H1 (cell line): ENCODE measurements at regions of chr2 and their contacts with region 1.

Region 1: DNA sequence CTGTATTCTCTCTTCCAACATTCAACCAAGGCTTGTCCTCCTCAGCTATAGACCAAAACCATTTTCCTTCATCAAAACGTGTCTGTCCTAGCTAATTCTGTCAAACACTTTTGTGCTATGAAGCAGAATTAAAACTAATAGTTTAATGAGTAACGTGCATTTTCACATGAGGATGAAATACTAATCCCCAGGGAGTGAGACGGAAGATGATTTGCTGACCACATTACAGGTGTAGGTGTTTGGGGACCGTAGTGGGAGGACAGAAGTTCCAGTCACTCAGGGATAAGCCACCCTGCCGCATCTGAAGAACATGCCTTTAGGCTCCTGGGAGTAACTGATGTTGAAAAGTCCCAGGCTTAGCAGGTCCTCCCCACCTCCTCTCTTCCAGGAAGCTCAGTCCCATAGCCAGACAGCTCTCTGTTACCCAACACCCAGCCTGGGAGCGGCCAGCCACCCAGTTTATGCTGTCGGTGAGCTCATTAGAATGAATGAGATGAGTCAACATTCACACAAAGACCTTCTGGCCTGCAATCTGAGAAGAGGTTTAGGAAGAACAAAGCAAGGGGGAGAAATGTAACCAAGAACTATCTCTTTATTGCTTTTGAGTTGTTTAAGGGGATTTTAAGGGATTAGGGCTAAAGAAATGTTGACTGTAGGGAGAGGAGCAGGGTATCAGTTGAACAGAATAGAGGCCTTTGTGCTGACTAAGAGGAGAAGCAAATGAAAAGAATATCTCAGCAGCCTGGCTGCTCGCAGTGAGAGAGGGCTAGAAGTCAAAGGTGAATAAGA is 122.5 kb downstream of the FOXI3 start:
- DNase-seq: peak; percentile 54 to 77
- H3K4me3 ChIP-seq: no peak overlapping the region
- H3K27ac ChIP-seq: no peak overlapping the region
- H3K4me1 ChIP-seq: peaks cover 2 to 12% (median 9%) of the 10 kb centered on the region in 4 experiments; a peak in 6 of 7 replicates
- H3K27me3 ChIP-seq: no peaks in the 10 kb centered on the region
- CTCF ChIP-seq: no peak
- EP300 ChIP-seq: no peak
- POLR2A ChIP-seq: no peak
- RAD21 ChIP-seq: no peak

Region 2: DNA sequence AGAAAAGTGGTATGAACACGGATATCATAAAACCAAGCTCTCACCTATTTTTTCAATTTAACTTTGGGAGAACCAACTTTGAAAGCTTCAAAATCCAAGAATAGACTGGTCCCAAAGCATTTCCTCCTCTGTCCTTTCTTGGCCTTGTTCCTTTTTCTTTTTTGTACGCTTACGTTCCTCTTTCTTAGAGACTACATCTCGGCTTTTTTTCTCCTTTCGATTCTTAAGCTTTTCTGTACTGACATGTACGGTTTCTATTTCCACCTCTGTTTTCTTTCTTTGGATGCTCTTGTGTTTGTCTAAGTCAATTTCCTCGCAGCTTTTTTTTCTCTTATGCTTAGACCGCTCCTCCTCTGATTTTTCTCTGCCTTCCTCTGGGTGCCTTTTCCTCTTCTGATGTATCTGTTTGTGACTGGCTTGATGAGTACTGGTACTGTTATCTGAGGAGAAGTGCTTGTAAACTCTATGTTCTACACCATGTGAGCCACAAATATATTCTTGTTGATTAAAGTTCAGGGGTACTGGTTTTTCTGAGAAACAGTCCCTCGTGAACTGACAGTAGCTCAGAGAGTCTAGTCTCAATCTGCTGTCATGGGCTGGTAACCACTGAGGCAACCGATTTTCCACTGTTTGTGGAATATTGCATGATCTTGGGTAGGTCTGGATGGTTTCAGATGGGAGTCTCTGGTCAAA is 302.2 kb before region 1 on chr2:
- CTCF ChIA-PET with region 1: no interaction called
- POLR2A ChIA-PET with region 1: no interaction called
- DNase-seq: no peak
- H3K4me3 ChIP-seq: no peak overlapping the region
- H3K27ac ChIP-seq: no peak overlapping the region
- H3K4me1 ChIP-seq: no peaks in the 10 kb centered on the region; a peak in 2 of 7 replicates
- H3K27me3 ChIP-seq: no peaks in the 10 kb centered on the region
- CTCF ChIP-seq: no peak
- EP300 ChIP-seq: no peak
- POLR2A ChIP-seq: no peak
- RAD21 ChIP-seq: no peak

Region 3: GRCh38 chr2:88350331-88351248 is 20.6 kb after region 1 on chr2:
- CTCF ChIA-PET with region 1: interaction called, 10 read pairs
- POLR2A ChIA-PET with region 1: no interaction called
- DNase-seq: peak in 1 of 2 experiments; percentile 96
- H3K4me3 ChIP-seq: peak overlapping the region; percentile 14 to 52 (median 34)
- H3K27ac ChIP-seq: peak overlapping the region; percentile 78
- H3K4me1 ChIP-seq: peaks cover 3 to 9% (median 7%) of the 10 kb centered on the region in 4 experiments
- H3K27me3 ChIP-seq: peaks cover 0 to 10% (median 2%) of the 10 kb centered on the region in 4 experiments; a peak in 2 of 7 replicates
- CTCF ChIP-seq: peak; percentile 84 to 90 (median 86)
- EP300 ChIP-seq: 0 out of 3 replicates have a peak, but pooled peaks of 1 of the 2 experiments have one; percentile 37
- POLR2A ChIP-seq: peak in 1 of 2 experiments; percentile 92; a peak in 2 of 3 replicates
- RAD21 ChIP-seq: peak; percentile 50 to 64